Naive thymus-derived CD4-positive, alpha-beta T cell (primary cell): ENCODE measurements at regions of chr18 and their contacts with region 1.

Region 1: GRCh38 chr18:35231052-35231451 is 9.8 kb upstream of the ZNF397 start:
- DNase-seq: peak; percentile 49 to 80 (median 73)
- ATAC-seq: peak; percentile 97
- H3K4me3 ChIP-seq: no peak overlapping the region
- H3K4me3 Mint-ChIP-seq: peak overlapping the region in 9 of 10 donors; percentile 1 to 71 (median 53)
- H3K27ac ChIP-seq: no peak overlapping the region
- H3K27ac Mint-ChIP-seq: peak overlapping the region in 1 of 9 donors; percentile 37
- H3K4me1 ChIP-seq: no peaks in the 10 kb centered on the region
- H3K4me1 Mint-ChIP-seq: peaks cover 3 to 5% (median 4%) of the 10 kb centered on the region in 7 donors
- H3K27me3 ChIP-seq: no peaks in the 10 kb centered on the region
- H3K27me3 Mint-ChIP-seq: no peaks in the 10 kb centered on the region

Region 2: DNA sequence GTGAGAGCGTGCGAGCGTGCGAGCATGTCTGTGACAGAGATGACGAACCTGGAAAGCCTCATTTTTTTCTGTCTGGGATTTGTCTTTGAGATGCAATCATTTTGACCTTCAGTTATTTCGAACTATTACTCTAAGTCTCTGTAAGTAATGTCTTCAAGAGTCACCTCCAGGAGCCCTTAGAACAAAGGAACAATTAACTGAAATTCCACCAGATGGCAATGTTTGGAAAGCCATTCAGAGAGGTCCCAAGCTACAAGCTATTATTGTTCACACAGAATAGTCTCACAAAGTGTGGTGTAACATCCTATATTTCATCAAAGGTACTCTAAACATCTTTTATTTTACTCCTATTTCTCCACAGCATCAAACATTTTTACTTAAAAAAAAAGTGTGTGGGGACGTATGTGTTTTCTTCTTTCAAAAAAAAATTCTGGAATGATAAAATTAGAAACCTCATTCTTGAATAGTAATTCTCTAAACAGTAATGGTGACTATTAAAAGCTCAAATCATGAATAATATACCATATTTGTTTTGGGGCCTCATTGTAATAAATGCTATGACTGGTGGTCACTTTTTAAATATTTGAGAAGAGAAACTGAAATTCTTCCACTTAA is 225.0 kb before region 1 on chr18:
- CTCF ChIA-PET with region 1: interaction called, 3 read pairs
- POLR2A ChIA-PET with region 1: no interaction called
- intact Hi-C with region 1: loop called (anchors 1 to 2 kb)
- DNase-seq: peak in 7 of 9 donors; percentile 29 to 66 (median 54)
- ATAC-seq: peak; percentile 80
- H3K4me3 ChIP-seq: no peak overlapping the region
- H3K4me3 Mint-ChIP-seq: no peak overlapping the region
- H3K27ac ChIP-seq: no peak overlapping the region
- H3K27ac Mint-ChIP-seq: no peak overlapping the region
- H3K4me1 ChIP-seq: no peaks in the 10 kb centered on the region
- H3K4me1 Mint-ChIP-seq: no peaks in the 10 kb centered on the region
- H3K27me3 ChIP-seq: no peaks in the 10 kb centered on the region
- H3K27me3 Mint-ChIP-seq: no peaks in the 10 kb centered on the region

Region 3: GRCh38 chr18:35290073-35290735 is 59.2 kb after region 1 on chr18 and contains the start of gene ZSCAN30:
- CTCF ChIA-PET with region 1: no interaction called
- POLR2A ChIA-PET with region 1: interaction called, 3 read pairs
- intact Hi-C with region 1: loop called in 1 of 2 experiments (anchors 2 kb)
- DNase-seq: peak; percentile 90 to 96 (median 94)
- ATAC-seq: peak; percentile 99
- H3K4me3 ChIP-seq: peak within 1 kb of the TSS; percentile 90
- H3K4me3 Mint-ChIP-seq: peak within 1 kb of the TSS; percentile 97 to 99 (median 98)
- H3K27ac ChIP-seq: peak within 1 kb of the TSS; percentile 86
- H3K27ac Mint-ChIP-seq: peak within 1 kb of the TSS; percentile 94 to 100 (median 98)
- H3K4me1 ChIP-seq: peaks cover 16 to 18% of the 10 kb centered on the region in 2 donors
- H3K4me1 Mint-ChIP-seq: peaks cover 29 to 86% (median 75%) of the 10 kb centered on the region in 7 donors
- H3K27me3 ChIP-seq: no peaks in the 10 kb centered on the region
- H3K27me3 Mint-ChIP-seq: no peaks in the 10 kb centered on the region
- total RNA-seq, gene ZSCAN30: 14.0 to 23.2 (median 20.8) TPM

Region 4: GRCh38 chr18:35386600-35387351 is 155.7 kb after region 1 on chr18:
- CTCF ChIA-PET with region 1: interaction called, 8 read pairs
- POLR2A ChIA-PET with region 1: interaction called, 3 read pairs
- intact Hi-C with region 1: loop called (anchors 1 kb)
- DNase-seq: peak in 8 of 9 donors; percentile 45 to 78 (median 72)
- ATAC-seq: peak; percentile 95
- H3K4me3 ChIP-seq: no peak overlapping the region
- H3K4me3 Mint-ChIP-seq: peak overlapping the region in 1 of 10 donors; percentile 26
- H3K27ac ChIP-seq: no peak overlapping the region
- H3K27ac Mint-ChIP-seq: peak overlapping the region in 1 of 9 donors; percentile 48
- H3K4me1 ChIP-seq: no peaks in the 10 kb centered on the region
- H3K4me1 Mint-ChIP-seq: peaks cover 0 to 11% (median 5%) of the 10 kb centered on the region in 7 donors
- H3K27me3 ChIP-seq: no peaks in the 10 kb centered on the region
- H3K27me3 Mint-ChIP-seq: peaks cover 13 to 41% (median 28%) of the 10 kb centered on the region in 5 donors

Region 5: GRCh38 chr18:35484034-35484433 is 253.0 kb after region 1 on chr18:
- CTCF ChIA-PET with region 1: no interaction called
- POLR2A ChIA-PET with region 1: no interaction called
- intact Hi-C with region 1: no loop called
- DNase-seq: no peak
- ATAC-seq: no peak
- H3K4me3 ChIP-seq: no peak overlapping the region
- H3K4me3 Mint-ChIP-seq: no peak overlapping the region
- H3K27ac ChIP-seq: no peak overlapping the region
- H3K27ac Mint-ChIP-seq: no peak overlapping the region
- H3K4me1 ChIP-seq: no peaks in the 10 kb centered on the region
- H3K4me1 Mint-ChIP-seq: peaks cover 4 to 37% (median 20%) of the 10 kb centered on the region in 7 donors
- H3K27me3 ChIP-seq: no peaks in the 10 kb centered on the region
- H3K27me3 Mint-ChIP-seq: no peaks in the 10 kb centered on the region

Region 6: DNA sequence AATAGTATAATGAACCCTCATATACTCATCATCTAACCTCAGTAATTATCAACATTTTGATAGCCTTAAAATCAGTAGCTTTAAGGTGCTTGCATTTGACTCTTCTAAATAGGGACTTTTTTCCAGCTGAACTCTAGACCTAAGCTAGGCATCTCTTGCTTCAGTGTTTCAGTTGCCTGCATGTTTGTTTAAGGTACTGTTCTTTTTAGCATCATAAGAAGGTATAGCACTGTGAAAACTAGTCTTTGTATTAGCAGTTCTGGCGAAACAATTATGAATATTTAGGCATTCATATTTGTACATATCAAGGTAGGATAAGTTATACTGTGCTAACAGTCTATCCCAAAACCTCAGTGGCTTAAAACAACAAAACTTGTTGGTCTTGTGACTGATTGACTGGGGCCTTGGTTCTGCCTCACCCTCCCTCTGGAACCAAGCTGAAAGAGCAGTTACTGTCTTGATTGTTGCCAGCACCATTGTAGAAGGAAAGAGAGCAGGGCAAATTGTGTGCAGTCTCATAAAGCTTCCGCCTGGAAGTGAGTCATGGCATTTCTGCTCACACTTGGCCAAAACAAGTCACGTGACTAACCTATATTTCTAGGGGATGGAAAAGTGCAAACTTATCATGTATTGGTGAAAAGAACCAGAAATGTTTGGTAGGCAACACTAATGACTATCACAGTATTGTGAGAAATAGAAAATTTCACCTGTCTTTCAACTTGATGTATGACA is 374.8 kb after region 1 on chr18:
- CTCF ChIA-PET with region 1: no interaction called
- POLR2A ChIA-PET with region 1: no interaction called
- intact Hi-C with region 1: no loop called
- DNase-seq: no peak
- ATAC-seq: no peak
- H3K4me3 ChIP-seq: no peak overlapping the region
- H3K4me3 Mint-ChIP-seq: no peak overlapping the region
- H3K27ac ChIP-seq: no peak overlapping the region
- H3K27ac Mint-ChIP-seq: peak overlapping the region in 2 of 9 donors; percentile 8 to 21
- H3K4me1 ChIP-seq: no peaks in the 10 kb centered on the region
- H3K4me1 Mint-ChIP-seq: peaks cover 7 to 49% (median 32%) of the 10 kb centered on the region in 7 donors
- H3K27me3 ChIP-seq: no peaks in the 10 kb centered on the region
- H3K27me3 Mint-ChIP-seq: no peaks in the 10 kb centered on the region

Region 7: DNA sequence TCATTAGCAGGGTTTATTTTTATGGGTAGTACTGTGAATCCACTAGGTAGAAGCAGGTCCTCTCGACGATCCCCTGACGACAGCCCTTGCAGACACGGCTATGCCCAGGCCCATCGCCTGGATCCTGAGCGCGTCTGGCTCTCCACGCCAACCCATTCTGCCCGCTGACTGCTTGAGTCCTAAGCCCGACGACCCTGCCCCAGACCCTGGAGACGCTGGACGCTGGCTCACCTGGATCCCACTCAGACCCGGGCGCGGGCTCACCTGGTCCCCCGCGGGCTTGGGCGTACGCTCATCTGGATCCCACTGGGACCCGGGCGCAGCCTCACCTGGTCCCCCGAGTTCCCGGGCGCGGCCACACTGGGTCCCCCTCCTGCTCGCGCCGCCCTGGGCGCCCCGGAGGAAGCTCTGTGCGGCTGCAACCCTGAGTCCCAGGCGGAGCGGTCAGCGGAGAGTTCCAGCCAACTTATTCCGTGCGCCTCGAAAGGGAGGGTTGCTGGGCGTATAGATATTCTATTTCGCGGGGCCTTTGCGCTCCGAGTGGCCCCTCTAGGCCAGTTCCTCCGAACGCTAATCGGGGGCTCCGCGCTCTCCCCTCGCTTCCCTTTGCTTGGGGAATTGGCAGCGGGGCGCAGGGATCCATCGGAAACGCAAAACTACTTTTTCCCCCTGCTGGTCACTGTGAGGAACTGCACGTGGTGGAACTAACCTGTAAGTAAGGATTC is 719.0 kb after region 1 on chr18:
- CTCF ChIA-PET with region 1: interaction called, 3 read pairs
- POLR2A ChIA-PET with region 1: no interaction called
- intact Hi-C with region 1: loop called in 1 of 2 experiments (anchors 2 kb)
- DNase-seq: peak; percentile 36 to 68 (median 57)
- ATAC-seq: peak; percentile 89
- H3K4me3 ChIP-seq: peak overlapping the region; percentile 70
- H3K4me3 Mint-ChIP-seq: peak overlapping the region; percentile 78 to 93 (median 88)
- H3K27ac ChIP-seq: no peak overlapping the region
- H3K27ac Mint-ChIP-seq: peak overlapping the region in 4 of 9 donors; percentile 21 to 59 (median 28)
- H3K4me1 ChIP-seq: peaks cover 4 to 8% of the 10 kb centered on the region in 2 donors
- H3K4me1 Mint-ChIP-seq: peaks cover 0 to 9% (median 4%) of the 10 kb centered on the region in 7 donors
- H3K27me3 ChIP-seq: peaks cover 0 to 4% of the 10 kb centered on the region in 2 donors
- H3K27me3 Mint-ChIP-seq: peaks cover 14 to 33% (median 24%) of the 10 kb centered on the region in 5 donors